ENCODE measurements at regions of chr6 and their contacts with region 1.

Region 1: GRCh38 chr6:110398778-110399177 is 16.6 kb downstream of the DDO start:
- DNase-seq: peak; percentile 52
- H3K4me3 ChIP-seq: no peak overlapping the region
- H3K27ac ChIP-seq: no peak overlapping the region
- H3K4me1 ChIP-seq: no peaks in the 10 kb centered on the region
- H3K27me3 ChIP-seq: no peaks in the 10 kb centered on the region

Region 2: GRCh38 chr6:109705258-109705657 is 693.5 kb before region 1 on chr6:
- in situ Hi-C with region 1: loop called (anchors 10 kb)
- DNase-seq: peak; percentile 91
- H3K4me3 ChIP-seq: no peak overlapping the region
- H3K27ac ChIP-seq: no peak overlapping the region
- H3K4me1 ChIP-seq: no peaks in the 10 kb centered on the region
- H3K27me3 ChIP-seq: no peaks in the 10 kb centered on the region

Region 3: GRCh38 chr6:110053395-110054240 is 345.2 kb before region 1 on chr6:
- in situ Hi-C with region 1: loop called (anchors 10 kb)
- DNase-seq: peak; percentile 75
- H3K4me3 ChIP-seq: no peak overlapping the region
- H3K27ac ChIP-seq: no peak overlapping the region
- H3K4me1 ChIP-seq: no peaks in the 10 kb centered on the region
- H3K27me3 ChIP-seq: peaks cover 12% of the 10 kb centered on the region

Region 4: DNA sequence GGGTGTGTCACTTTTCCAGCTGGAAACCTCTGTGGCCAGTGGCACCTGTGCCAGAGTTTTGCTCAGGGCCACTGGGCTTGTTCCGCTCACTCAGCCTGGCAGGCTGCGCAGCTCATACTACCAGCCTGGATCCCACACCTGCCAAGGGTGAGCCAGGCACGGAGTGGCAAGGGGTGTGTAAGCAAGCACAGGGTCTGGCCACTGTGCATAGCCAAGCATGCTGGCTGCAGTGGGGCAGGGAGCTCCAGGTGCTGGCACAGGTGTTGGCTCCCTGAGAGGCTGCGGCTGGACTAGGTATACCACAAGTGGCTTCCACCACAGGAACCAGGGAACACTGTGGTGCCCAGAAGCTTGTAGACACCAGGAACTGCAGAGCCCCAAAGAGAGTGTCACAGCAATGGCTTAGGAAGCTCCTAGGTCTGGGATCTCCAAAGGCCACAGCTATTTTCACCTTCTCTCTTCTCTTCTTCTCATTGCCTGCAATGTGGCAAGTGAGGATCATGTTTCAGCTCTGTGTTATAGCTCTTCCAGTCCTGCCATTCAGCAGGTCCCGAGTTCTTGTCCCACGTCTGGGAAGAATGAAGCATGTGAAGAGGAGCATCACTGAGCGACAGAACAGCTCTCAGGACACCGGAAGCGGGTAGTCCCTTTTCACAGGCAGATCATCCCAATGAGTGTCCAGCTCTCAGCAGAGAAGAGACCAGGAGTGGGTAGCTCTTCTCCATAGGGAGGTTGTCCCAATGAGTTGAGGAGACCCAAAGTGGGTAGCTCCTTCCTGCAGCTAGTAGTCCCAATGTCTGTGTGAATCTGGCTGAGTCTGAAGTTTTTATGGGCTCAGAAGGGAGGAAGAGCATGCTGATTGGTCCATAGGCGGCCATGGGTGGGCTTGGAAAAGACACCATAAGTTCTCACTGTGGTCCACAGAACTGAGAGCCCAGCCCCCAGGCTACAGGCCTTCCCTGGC is 260.6 kb before region 1 on chr6:
- in situ Hi-C with region 1: no loop called
- DNase-seq: no peak
- H3K4me3 ChIP-seq: no peak overlapping the region
- H3K27ac ChIP-seq: no peak overlapping the region
- H3K4me1 ChIP-seq: peaks cover 15% of the 10 kb centered on the region
- H3K27me3 ChIP-seq: no peaks in the 10 kb centered on the region